ENCODE measurements at regions of chr11 and their contacts with region 1.

Region 1: GRCh38 chr11:123580557-123581275 is 73.7 kb downstream of the SCN3B start:
- DNase-seq: peak; percentile 40 to 58 (median 58)
- H3K4me3 ChIP-seq: no peak overlapping the region
- H3K27ac ChIP-seq: no peak overlapping the region
- H3K4me1 ChIP-seq: peaks cover 3 to 16% (median 8%) of the 10 kb centered on the region in 4 experiments
- H3K27me3 ChIP-seq: no peaks in the 10 kb centered on the region

Region 2: GRCh38 chr11:123560006-123560405 is 20.7 kb before region 1 on chr11:
- CTCF ChIA-PET with region 1: interaction called, 36 read pairs
- POLR2A ChIA-PET with region 1: no interaction called
- DNase-seq: peak; percentile 63 to 88 (median 85)
- H3K4me3 ChIP-seq: peak overlapping the region; percentile 23 to 76 (median 58)
- H3K27ac ChIP-seq: no peak overlapping the region
- H3K4me1 ChIP-seq: peaks cover 6 to 22% (median 16%) of the 10 kb centered on the region in 4 experiments
- H3K27me3 ChIP-seq: no peaks in the 10 kb centered on the region

Measured in common myeloid progenitor, CD34-positive (primary cell).